Caco-2 (cell line): ENCODE measurements at regions of chr3 and their contacts with region 1.

Region 1: GRCh38 chr3:36957862-36958686 is 13.2 kb upstream of the TRANK1 start:
- DNase-seq: no peak
- H3K4me3 ChIP-seq: peak overlapping the region; percentile 4; the same call in 1 of the 2 replicates
- H3K4me3 Mint-ChIP-seq: peak overlapping the region; percentile 70
- H3K27ac Mint-ChIP-seq: peak overlapping the region; percentile 91
- H3K4me1 ChIP-seq: peaks cover 25% of the 10 kb centered on the region
- H3K4me1 Mint-ChIP-seq: peaks cover 26% of the 10 kb centered on the region
- H3K27me3 ChIP-seq: no peaks in the 10 kb centered on the region
- H3K27me3 Mint-ChIP-seq: no peaks in the 10 kb centered on the region
- CTCF ChIP-seq: no peak

Region 2: DNA sequence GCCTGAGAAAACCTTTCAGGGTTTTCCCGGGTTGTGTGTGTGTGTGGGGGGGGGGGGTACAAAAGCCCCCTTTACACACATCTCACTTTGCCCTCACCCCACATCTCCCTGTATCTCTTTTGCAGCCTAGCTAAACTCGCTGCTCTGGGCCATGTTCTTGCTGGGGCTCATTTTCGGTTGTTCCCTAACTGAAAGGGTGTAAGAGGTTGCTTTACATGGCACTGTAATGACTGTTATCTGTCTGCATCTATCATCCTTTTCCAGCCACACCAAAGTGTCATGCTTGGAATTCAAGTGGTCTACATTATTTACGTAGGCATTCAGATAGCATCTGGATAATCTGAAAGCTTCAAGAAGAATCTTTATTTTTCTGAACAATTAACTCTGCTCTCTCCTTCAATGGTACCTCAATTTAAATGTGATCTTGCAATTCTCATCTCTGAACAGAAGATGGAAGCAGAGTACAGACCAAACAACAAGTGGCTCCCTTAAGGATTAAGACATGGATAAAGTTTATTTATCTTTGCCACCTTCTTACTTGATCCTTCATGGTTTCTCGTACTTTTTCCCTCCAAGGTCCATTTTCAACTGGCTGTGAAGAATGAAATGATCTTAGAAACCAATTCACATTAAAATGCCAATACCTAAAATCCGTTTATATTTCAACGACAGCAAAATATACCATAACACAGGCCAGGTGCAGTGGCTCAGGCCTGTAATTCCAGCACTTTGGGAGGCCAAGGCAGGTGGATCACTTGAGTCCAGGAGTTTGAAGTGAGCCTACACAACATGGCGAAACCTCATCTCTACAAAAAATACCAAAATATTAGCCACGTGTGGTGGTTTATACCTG is 228.6 kb before region 1 on chr3:
- CTCF ChIA-PET with region 1: interaction called, 5 read pairs
- POLR2A ChIA-PET with region 1: no interaction called
- intact Hi-C with region 1: loop called (anchors 1 kb)
- DNase-seq: peak in 1 of 2 experiments; percentile 43
- H3K4me3 ChIP-seq: no peak overlapping the region
- H3K4me3 Mint-ChIP-seq: no peak overlapping the region
- H3K27ac Mint-ChIP-seq: no peak overlapping the region
- H3K4me1 ChIP-seq: peaks cover 16% of the 10 kb centered on the region; the same call in 1 of the 2 replicates
- H3K4me1 Mint-ChIP-seq: peaks cover 26% of the 10 kb centered on the region
- H3K27me3 ChIP-seq: no peaks in the 10 kb centered on the region
- H3K27me3 Mint-ChIP-seq: peaks cover 12% of the 10 kb centered on the region
- CTCF ChIP-seq: peak; percentile 61 to 65

Region 3: DNA sequence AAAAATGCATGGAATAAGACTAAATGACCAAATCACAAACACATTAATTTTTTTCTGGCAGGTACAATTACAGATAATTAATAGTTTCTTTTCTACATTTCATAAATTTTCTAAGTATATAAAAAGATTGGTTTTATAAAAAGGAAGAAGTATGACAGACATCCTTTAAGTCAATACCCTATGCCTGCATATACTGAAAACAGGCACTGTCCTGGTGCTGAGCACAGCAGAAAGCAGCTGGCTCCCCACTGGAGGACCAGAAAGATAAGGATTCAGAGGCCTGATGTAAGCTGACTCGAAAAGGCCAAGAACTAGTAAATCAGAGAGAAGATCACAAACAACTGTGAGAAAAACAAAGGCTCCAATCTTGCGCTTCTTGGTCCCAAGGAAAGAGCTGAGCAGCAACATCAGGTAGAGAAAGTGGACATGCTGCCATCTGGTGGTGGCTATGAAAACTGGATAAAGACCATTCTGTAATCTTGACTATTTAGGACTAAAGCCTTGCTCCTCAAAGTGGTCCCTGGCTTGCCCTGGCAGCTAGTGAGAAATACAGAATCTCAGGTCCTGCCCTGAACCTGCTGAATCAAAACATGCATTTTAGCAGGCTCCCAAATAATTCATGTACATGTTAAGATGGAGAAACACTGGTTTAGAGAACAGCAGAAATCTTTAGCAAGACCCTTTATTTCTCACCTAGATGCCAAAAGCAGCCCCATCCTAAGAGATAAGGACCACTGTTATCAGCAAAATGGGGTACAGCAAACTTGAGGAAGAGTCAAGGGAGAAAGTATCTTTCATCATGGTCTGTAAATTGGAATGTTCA is 89.2 kb before region 1 on chr3:
- CTCF ChIA-PET with region 1: interaction called, 8 read pairs
- POLR2A ChIA-PET with region 1: no interaction called
- intact Hi-C with region 1: loop called (anchors 1 kb)
- DNase-seq: peak; percentile 45 to 60
- H3K4me3 ChIP-seq: no peak overlapping the region
- H3K4me3 Mint-ChIP-seq: no peak overlapping the region
- H3K27ac Mint-ChIP-seq: no peak overlapping the region
- H3K4me1 ChIP-seq: no peaks in the 10 kb centered on the region
- H3K4me1 Mint-ChIP-seq: no peaks in the 10 kb centered on the region
- H3K27me3 ChIP-seq: no peaks in the 10 kb centered on the region
- H3K27me3 Mint-ChIP-seq: peaks cover 3% of the 10 kb centered on the region
- CTCF ChIP-seq: peak; percentile 49 to 69

Region 4: GRCh38 chr3:36895496-36896409 is 62.3 kb before region 1 on chr3:
- CTCF ChIA-PET with region 1: no interaction called
- POLR2A ChIA-PET with region 1: no interaction called
- intact Hi-C with region 1: no loop called
- DNase-seq: no peak
- H3K4me3 ChIP-seq: no peak overlapping the region
- H3K4me3 Mint-ChIP-seq: no peak overlapping the region
- H3K27ac Mint-ChIP-seq: no peak overlapping the region
- H3K4me1 ChIP-seq: no peaks in the 10 kb centered on the region
- H3K4me1 Mint-ChIP-seq: no peaks in the 10 kb centered on the region
- H3K27me3 ChIP-seq: no peaks in the 10 kb centered on the region
- H3K27me3 Mint-ChIP-seq: no peaks in the 10 kb centered on the region
- CTCF ChIP-seq: no peak

Region 5: DNA sequence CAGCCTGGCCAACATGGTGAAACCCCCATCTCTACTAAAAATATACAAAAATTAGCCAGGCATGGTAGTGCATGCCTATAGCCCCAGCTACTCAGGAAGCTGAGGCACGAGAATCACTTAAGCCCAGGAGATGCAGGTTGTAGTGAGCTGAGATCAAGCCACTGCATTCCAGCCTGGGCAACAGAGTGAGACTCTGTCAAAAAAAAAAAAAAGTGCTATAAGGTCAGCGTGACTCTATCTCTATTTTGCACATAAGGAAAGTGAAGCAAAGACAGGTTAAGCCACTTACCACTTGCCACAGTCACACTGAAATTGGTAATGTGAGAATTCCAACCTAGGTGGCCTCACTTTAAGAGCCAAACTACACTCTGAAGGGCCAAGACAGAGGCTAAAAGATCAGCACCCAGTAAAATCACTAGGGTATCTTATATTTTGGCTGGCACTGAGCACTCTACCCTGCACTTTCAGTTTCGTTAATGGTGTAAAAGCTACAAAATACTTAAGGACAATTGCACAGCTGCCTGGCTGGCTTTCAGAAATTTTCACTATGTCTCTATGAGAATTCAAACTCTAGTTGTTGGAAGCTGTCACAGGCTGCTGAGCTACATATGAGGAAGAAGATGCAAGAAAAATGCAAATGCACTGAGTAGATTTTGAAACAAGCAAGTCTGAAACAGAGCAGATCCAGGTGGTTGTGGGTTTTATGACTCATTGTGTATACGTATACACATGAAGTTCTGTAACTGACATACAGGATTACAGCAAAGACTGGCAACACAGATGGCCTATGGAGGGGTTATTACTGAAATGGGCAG is 45.9 kb before region 1 on chr3:
- CTCF ChIA-PET with region 1: interaction called, 75 read pairs
- POLR2A ChIA-PET with region 1: no interaction called
- intact Hi-C with region 1: loop called (anchors 2 kb)
- DNase-seq: no peak
- H3K4me3 ChIP-seq: no peak overlapping the region
- H3K4me3 Mint-ChIP-seq: no peak overlapping the region
- H3K27ac Mint-ChIP-seq: no peak overlapping the region
- H3K4me1 ChIP-seq: 0 out of 2 replicates have a peak, but pooled peaks cover 7% of the 10 kb centered on the region
- H3K4me1 Mint-ChIP-seq: peaks cover 25% of the 10 kb centered on the region
- H3K27me3 ChIP-seq: no peaks in the 10 kb centered on the region
- H3K27me3 Mint-ChIP-seq: no peaks in the 10 kb centered on the region
- CTCF ChIP-seq: no peak

Region 6: DNA sequence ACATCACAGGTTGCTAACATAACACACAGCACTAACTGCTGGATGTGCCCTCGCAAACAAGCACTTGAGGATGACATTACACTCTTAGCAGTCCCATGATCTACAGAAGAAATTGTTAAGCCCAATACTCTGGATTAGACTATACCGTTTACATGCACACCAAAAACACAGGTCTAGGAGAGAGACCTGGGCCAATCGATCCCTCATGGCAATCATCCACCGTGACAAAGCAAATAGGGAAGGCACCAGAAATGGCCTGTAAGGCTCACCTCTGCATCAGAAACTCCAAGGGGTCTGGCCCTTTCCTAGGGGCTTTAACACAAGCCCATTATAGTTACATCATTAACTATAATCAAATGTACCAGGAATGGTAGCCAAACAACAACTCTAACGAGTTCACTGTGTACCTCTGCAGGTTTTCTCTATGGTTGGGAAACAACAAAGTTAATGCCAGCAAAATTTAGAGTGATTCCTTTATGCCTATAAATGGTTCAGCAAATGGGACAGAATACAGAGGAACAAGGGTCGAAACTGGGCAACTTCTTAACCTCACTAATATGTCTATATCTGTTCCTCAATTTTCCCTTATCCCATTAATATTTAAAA is 31.7 kb before region 1 on chr3:
- CTCF ChIA-PET with region 1: no interaction called
- POLR2A ChIA-PET with region 1: no interaction called
- intact Hi-C with region 1: no loop called
- DNase-seq: no peak
- H3K4me3 ChIP-seq: no peak overlapping the region
- H3K4me3 Mint-ChIP-seq: no peak overlapping the region
- H3K27ac Mint-ChIP-seq: no peak overlapping the region
- H3K4me1 ChIP-seq: no peaks in the 10 kb centered on the region
- H3K4me1 Mint-ChIP-seq: peaks cover 13% of the 10 kb centered on the region
- H3K27me3 ChIP-seq: no peaks in the 10 kb centered on the region
- H3K27me3 Mint-ChIP-seq: no peaks in the 10 kb centered on the region
- CTCF ChIP-seq: no peak

Region 7: GRCh38 chr3:36944012-36944640 is 13.9 kb before region 1 on chr3:
- CTCF ChIA-PET with region 1: interaction called, 10 read pairs
- POLR2A ChIA-PET with region 1: no interaction called
- intact Hi-C with region 1: loop called (anchors 1 kb)
- DNase-seq: peak; percentile 50 to 62
- H3K4me3 ChIP-seq: peak overlapping the region; percentile 73
- H3K4me3 Mint-ChIP-seq: peak overlapping the region; percentile 81
- H3K27ac Mint-ChIP-seq: peak overlapping the region; percentile 55
- H3K4me1 ChIP-seq: peaks cover 7% of the 10 kb centered on the region; the same call in 1 of the 2 replicates
- H3K4me1 Mint-ChIP-seq: no peaks in the 10 kb centered on the region
- H3K27me3 ChIP-seq: no peaks in the 10 kb centered on the region
- H3K27me3 Mint-ChIP-seq: no peaks in the 10 kb centered on the region
- CTCF ChIP-seq: peak; percentile 7 to 10